ENCODE measurements at regions of chr3 and their contacts with region 1.

Region 1: GRCh38 chr3:126679318-126679751 is 24.4 kb upstream of the TXNRD3 start:
- DNase-seq: peak; percentile 74 to 84
- ATAC-seq: peak; percentile 77 to 95 (median 90)
- H3K4me3 ChIP-seq: no peak overlapping the region
- H3K27ac ChIP-seq: no peak overlapping the region
- H3K4me1 ChIP-seq: peaks cover 0 to 11% (median 7%) of the 10 kb centered on the region in 9 donors
- H3K27me3 ChIP-seq: peaks cover 0 to 33% (median 13%) of the 10 kb centered on the region in 7 donors
- CTCF ChIP-seq: peak; percentile 87 to 99 (median 97)

Region 2: GRCh38 chr3:126552701-126553283 is 126.5 kb before region 1 on chr3:
- intact Hi-C with region 1: no loop called
- DNase-seq: no peak
- ATAC-seq: peak in 1 of 8 donors; percentile 21
- H3K4me3 ChIP-seq: no peak overlapping the region
- H3K27ac ChIP-seq: no peak overlapping the region
- H3K4me1 ChIP-seq: peaks cover 0 to 5% (median 0%) of the 10 kb centered on the region in 9 donors
- H3K27me3 ChIP-seq: peaks cover 0 to 4% (median 0%) of the 10 kb centered on the region in 7 donors
- CTCF ChIP-seq: no peak

Region 3: GRCh38 chr3:126752303-126752842 is 73.0 kb after region 1 on chr3:
- intact Hi-C with region 1: loop called in 2 of 10 experiments (anchors 2 to 5 kb)
- DNase-seq: peak; percentile 79 to 80
- ATAC-seq: peak; percentile 87 to 94 (median 91)
- H3K4me3 ChIP-seq: no peak overlapping the region
- H3K27ac ChIP-seq: no peak overlapping the region
- H3K4me1 ChIP-seq: peaks cover 0 to 40% (median 4%) of the 10 kb centered on the region in 9 donors
- H3K27me3 ChIP-seq: no peaks in the 10 kb centered on the region
- CTCF ChIP-seq: peak; percentile 66 to 93 (median 87)

Region 4: GRCh38 chr3:126995926-126996512 is 316.7 kb after region 1 on chr3:
- intact Hi-C with region 1: loop called in 2 of 10 experiments (anchors 5 kb)
- DNase-seq: no peak
- ATAC-seq: no peak
- H3K4me3 ChIP-seq: no peak overlapping the region
- H3K27ac ChIP-seq: peak overlapping the region in 1 of 10 donors; percentile 77
- H3K4me1 ChIP-seq: peaks cover 30 to 99% (median 66%) of the 10 kb centered on the region in 9 donors
- H3K27me3 ChIP-seq: no peaks in the 10 kb centered on the region
- CTCF ChIP-seq: peak in 1 of 9 donors; percentile 17

Region 5: GRCh38 chr3:127172781-127173515 is 493.6 kb after region 1 on chr3:
- intact Hi-C with region 1: loop called in 5 of 10 experiments (anchors 2 to 5 kb)
- DNase-seq: no peak
- ATAC-seq: peak in 1 of 8 donors; percentile 28
- H3K4me3 ChIP-seq: no peak overlapping the region
- H3K27ac ChIP-seq: no peak overlapping the region
- H3K4me1 ChIP-seq: peaks cover 0 to 8% (median 5%) of the 10 kb centered on the region in 9 donors
- H3K27me3 ChIP-seq: peaks cover 0 to 23% (median 9%) of the 10 kb centered on the region in 7 donors
- CTCF ChIP-seq: no peak

Region 6: DNA sequence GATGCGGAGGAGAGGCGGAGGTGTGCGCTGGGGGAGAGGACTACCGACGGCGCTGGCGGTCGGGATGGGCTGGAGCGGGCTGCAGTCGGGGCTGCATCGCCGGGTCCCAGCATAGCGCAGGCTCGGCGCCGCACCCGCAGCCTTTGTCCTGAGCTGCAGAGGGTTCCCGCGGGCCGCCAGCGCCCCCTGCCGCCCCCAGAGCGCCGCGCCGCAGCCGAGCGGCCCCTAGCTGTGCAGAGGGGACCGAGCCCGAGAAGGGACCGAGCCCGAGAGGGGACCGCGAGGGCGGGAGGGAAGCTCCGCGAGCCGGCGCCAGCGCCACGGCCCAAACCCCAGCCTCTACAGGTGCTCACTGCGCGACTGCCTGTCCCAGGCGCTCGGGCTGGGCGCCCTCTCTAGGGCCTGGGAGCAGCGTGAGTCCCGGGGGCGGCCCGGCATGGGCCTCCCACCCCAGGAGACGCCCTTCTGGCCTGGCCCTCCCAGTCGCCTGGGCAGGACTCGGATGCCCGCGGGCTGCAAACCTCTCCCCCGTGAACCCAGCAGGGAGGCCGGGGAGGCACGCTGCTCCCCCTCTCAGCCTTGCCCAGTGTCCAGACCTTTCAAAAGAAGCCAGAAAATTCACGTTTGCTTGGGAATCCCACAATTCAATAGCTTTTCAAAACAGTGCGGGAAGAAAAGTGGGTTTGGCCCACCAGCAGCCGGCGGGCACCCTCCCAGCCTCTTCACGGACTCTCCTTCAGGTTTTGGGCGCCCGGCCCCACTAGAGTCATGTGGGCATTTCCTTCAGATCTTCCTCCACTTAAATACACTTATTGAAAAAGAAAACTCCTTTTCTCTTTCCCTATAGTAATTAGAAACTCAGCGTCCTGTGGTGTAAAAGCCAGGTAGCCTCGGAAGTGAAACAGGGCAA is 776.5 kb after region 1 on chr3:
- intact Hi-C with region 1: loop called in 9 of 10 experiments (anchors 2 to 5 kb)
- DNase-seq: peak; percentile 47 to 73
- ATAC-seq: peak; percentile 83 to 94 (median 89)
- H3K4me3 ChIP-seq: peak overlapping the region in 9 of 10 donors; percentile 12 to 42 (median 35)
- H3K27ac ChIP-seq: no peak overlapping the region
- H3K4me1 ChIP-seq: peaks cover 6 to 26% (median 21%) of the 10 kb centered on the region in 9 donors
- H3K27me3 ChIP-seq: peaks cover 15 to 78% (median 70%) of the 10 kb centered on the region in 7 donors
- CTCF ChIP-seq: peak; percentile 72 to 98 (median 92)